ENCODE measurements at regions of chr16 and their contacts with region 1.

Region 1: GRCh38 chr16:10385725-10386516 is at the start of gene ATF7IP2:
- DNase-seq: peak; percentile 98
- ATAC-seq: peak; percentile 98
- H3K4me3 ChIP-seq: peak within 1 kb of the TSS; percentile 88 to 95 (median 91)
- H3K27ac ChIP-seq: peak within 1 kb of the TSS; percentile 76
- H3K4me1 ChIP-seq: peaks cover 58% of the 10 kb centered on the region
- H3K27me3 ChIP-seq: no peaks in the 10 kb centered on the region; a peak in 1 of 5 replicates
- CTCF ChIP-seq: peak; percentile 5; the same call in 1 of the 2 replicates
- EP300 ChIP-seq: peak; percentile 36 to 90; a peak in 3 of 4 replicates
- POLR2A ChIP-seq: peak; percentile 100
- RAD21 ChIP-seq: peak; percentile 82
- total RNA-seq, gene ATF7IP2: 98.1 and 117 TPM in 2 replicates

Region 2: GRCh38 chr16:10256784-10257641 is 128.9 kb before region 1 on chr16:
- CTCF ChIA-PET with region 1: no interaction called
- POLR2A ChIA-PET with region 1: interaction called, 35 read pairs
- in situ Hi-C with region 1: no loop called
- intact Hi-C with region 1: loop called (anchors 1 kb)
- DNase-seq: peak; percentile 91
- ATAC-seq: peak; percentile 93
- H3K4me3 ChIP-seq: peak overlapping the region; percentile 41 to 66 (median 52)
- H3K27ac ChIP-seq: peak overlapping the region; percentile 83
- H3K4me1 ChIP-seq: peaks cover 51% of the 10 kb centered on the region
- H3K27me3 ChIP-seq: no peaks in the 10 kb centered on the region
- CTCF ChIP-seq: peak; percentile 92
- EP300 ChIP-seq: peak; percentile 22 to 86; a peak in 3 of 4 replicates
- POLR2A ChIP-seq: peak in 1 of 2 experiments; percentile 17; a peak in 1 of 4 replicates
- RAD21 ChIP-seq: peak; percentile 98

Region 3: GRCh38 chr16:10314811-10315210 is 71.1 kb before region 1 on chr16:
- CTCF ChIA-PET with region 1: no interaction called
- POLR2A ChIA-PET with region 1: interaction called, 12 read pairs
- in situ Hi-C with region 1: no loop called
- intact Hi-C with region 1: loop called (anchors 2 kb)
- DNase-seq: peak; percentile 65
- ATAC-seq: no peak
- H3K4me3 ChIP-seq: no peak overlapping the region
- H3K27ac ChIP-seq: no peak overlapping the region
- H3K4me1 ChIP-seq: peaks cover 73% of the 10 kb centered on the region
- H3K27me3 ChIP-seq: no peaks in the 10 kb centered on the region
- CTCF ChIP-seq: peak; percentile 80
- EP300 ChIP-seq: no peak
- POLR2A ChIP-seq: no peak
- RAD21 ChIP-seq: peak; percentile 74

Region 4: GRCh38 chr16:10362077-10362863 is 23.7 kb before region 1 on chr16:
- CTCF ChIA-PET with region 1: no interaction called
- POLR2A ChIA-PET with region 1: interaction called, 37 read pairs
- in situ Hi-C with region 1: no loop called
- intact Hi-C with region 1: no loop called
- DNase-seq: peak; percentile 98
- ATAC-seq: peak; percentile 97
- H3K4me3 ChIP-seq: peak overlapping the region in 1 of 3 experiments; percentile 27; a peak in 1 of 6 replicates
- H3K27ac ChIP-seq: peak overlapping the region; percentile 75
- H3K4me1 ChIP-seq: peaks cover 75% of the 10 kb centered on the region
- H3K27me3 ChIP-seq: no peaks in the 10 kb centered on the region
- CTCF ChIP-seq: peak; percentile 14; the same call in 1 of the 2 replicates
- EP300 ChIP-seq: peak in 1 of 2 experiments; percentile 95; a peak in 3 of 4 replicates
- POLR2A ChIP-seq: no peak
- RAD21 ChIP-seq: no peak

Region 5: GRCh38 chr16:10453159-10453510 is 67.2 kb after region 1 on chr16:
- CTCF ChIA-PET with region 1: no interaction called
- POLR2A ChIA-PET with region 1: interaction called, 20 read pairs
- in situ Hi-C with region 1: no loop called
- intact Hi-C with region 1: no loop called
- DNase-seq: no peak
- ATAC-seq: peak; percentile 39
- H3K4me3 ChIP-seq: peak overlapping the region in 2 of 3 experiments; percentile 25 to 47; a peak in 3 of 6 replicates
- H3K27ac ChIP-seq: peak overlapping the region; percentile 80
- H3K4me1 ChIP-seq: peaks cover 32% of the 10 kb centered on the region
- H3K27me3 ChIP-seq: no peaks in the 10 kb centered on the region
- CTCF ChIP-seq: no peak
- EP300 ChIP-seq: no peak
- POLR2A ChIP-seq: no peak
- RAD21 ChIP-seq: no peak

Measured in HepG2 (cell line).